ENCODE measurements at regions of chr2 and their contacts with region 1.

Region 1: DNA sequence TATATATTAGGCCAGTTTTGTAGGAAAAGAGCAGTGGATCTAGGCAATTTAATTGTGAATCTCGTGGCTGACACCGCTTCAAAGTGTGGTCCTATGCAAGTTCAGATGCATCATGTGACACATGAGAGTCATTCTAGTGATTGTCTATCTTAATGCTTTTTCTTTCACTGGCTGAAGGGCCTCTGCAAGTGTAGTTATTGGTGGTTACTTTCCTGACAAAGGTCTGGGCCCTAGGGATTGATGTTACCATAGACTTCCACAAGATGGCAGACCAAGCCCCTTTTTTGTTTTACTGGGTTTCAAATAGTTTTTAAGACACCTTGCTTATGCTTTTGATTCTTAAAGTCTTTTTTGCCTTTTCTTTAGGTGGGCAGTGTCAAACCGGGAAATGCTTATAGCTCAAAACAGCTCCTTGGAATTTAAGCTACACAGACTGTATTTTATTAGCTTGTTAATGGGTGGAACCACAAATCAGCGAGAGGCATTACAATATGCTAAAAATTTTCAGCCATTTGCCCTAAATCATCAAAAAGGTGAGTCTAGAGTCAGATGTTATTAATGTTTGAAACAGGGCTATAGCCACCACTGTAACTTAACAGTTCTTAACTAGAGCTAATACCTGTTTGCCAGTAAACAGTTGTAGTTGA is 25.9 kb downstream of the CD8A start:
- DNase-seq: peak; percentile 59 to 76 (median 73)
- H3K4me3 ChIP-seq: no peak overlapping the region
- H3K27ac ChIP-seq: no peak overlapping the region
- H3K4me1 ChIP-seq: no peaks in the 10 kb centered on the region
- H3K27me3 ChIP-seq: no peaks in the 10 kb centered on the region

Region 2: GRCh38 chr2:86323273-86324021 is 441.3 kb before region 1 on chr2:
- CTCF ChIA-PET with region 1: no interaction called
- POLR2A ChIA-PET with region 1: no interaction called
- DNase-seq: no peak
- H3K4me3 ChIP-seq: no peak overlapping the region
- H3K27ac ChIP-seq: no peak overlapping the region
- H3K4me1 ChIP-seq: no peaks in the 10 kb centered on the region
- H3K27me3 ChIP-seq: peaks cover 0 to 6% (median 4%) of the 10 kb centered on the region in 5 experiments

Region 3: DNA sequence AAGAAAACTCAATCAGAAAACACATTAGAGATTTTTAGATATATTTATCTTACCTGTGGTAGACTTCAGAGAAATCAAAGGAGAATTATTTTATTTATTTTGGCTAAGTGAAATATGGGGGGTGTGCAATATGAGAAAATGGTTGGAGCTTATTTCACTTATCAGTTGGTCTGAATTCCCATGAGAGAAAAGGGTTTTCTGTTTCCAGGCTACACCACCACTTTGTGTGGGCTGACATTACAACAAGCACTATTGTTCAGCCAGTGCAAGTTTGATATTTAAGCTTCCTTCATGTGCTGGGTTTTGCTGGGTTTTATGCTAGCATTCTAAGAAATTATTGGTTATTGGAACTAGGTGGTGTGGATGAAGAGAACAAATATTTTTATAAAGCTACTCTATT is 11.2 kb before region 1 on chr2:
- CTCF ChIA-PET with region 1: interaction called, 18 read pairs
- POLR2A ChIA-PET with region 1: no interaction called
- DNase-seq: no peak
- H3K4me3 ChIP-seq: no peak overlapping the region
- H3K27ac ChIP-seq: no peak overlapping the region
- H3K4me1 ChIP-seq: no peaks in the 10 kb centered on the region
- H3K27me3 ChIP-seq: no peaks in the 10 kb centered on the region

Region 4: DNA sequence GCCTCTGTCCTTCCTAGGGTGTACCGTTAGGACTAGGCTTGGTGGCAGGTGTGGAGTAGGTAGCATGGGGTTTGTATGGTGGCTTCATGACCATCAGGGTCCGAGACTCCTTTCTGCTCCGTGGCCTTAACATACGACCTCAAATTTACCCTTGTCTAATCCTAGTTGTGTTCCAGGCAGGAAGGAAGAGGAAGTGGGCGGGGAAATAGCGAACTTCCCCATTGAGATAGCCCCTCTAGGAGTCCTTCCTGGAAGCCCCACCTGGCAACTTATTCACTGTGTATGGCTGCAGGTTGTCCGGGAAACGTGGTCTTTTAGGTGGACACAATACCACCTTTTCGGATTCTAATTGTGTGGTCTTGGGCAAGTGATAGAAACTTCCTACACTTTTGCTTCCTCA is 16.6 kb after region 1 on chr2:
- CTCF ChIA-PET with region 1: interaction called, 11 read pairs
- POLR2A ChIA-PET with region 1: no interaction called
- DNase-seq: no peak
- H3K4me3 ChIP-seq: no peak overlapping the region
- H3K27ac ChIP-seq: no peak overlapping the region
- H3K4me1 ChIP-seq: no peaks in the 10 kb centered on the region
- H3K27me3 ChIP-seq: peaks cover 0 to 4% (median 0%) of the 10 kb centered on the region in 5 experiments

Region 5: GRCh38 chr2:86808315-86809161 is 43.8 kb after region 1 on chr2:
- CTCF ChIA-PET with region 1: interaction called, 10 read pairs
- POLR2A ChIA-PET with region 1: no interaction called
- DNase-seq: peak; percentile 85 to 92 (median 91)
- H3K4me3 ChIP-seq: peak overlapping the region in 6 of 7 experiments; percentile 52 to 85 (median 68)
- H3K27ac ChIP-seq: no peak overlapping the region
- H3K4me1 ChIP-seq: peaks cover 0 to 30% (median 23%) of the 10 kb centered on the region in 4 experiments
- H3K27me3 ChIP-seq: peaks cover 0 to 37% (median 10%) of the 10 kb centered on the region in 5 experiments

Measured in common myeloid progenitor, CD34-positive (primary cell).